GM12878 (cell line): ENCODE measurements at regions of chr12 and their contacts with region 1.

Region 1: GRCh38 chr12:62692884-62693283 is 226.3 kb downstream of the MON2 start:
- DNase-seq: no peak
- ATAC-seq: no peak
- H3K4me3 ChIP-seq: no peak overlapping the region
- H3K27ac ChIP-seq: no peak overlapping the region
- H3K4me1 ChIP-seq: no peaks in the 10 kb centered on the region; the same call in 1 of the 2 replicates
- H3K27me3 ChIP-seq: no peaks in the 10 kb centered on the region; a peak in 1 of 4 replicates
- CTCF ChIP-seq: no peak
- EP300 ChIP-seq: no peak
- POLR2A ChIP-seq: no peak
- RAD21 ChIP-seq: no peak

Region 2: GRCh38 chr12:62530596-62530995 is 162.3 kb before region 1 on chr12:
- CTCF ChIA-PET with region 1: no interaction called
- POLR2A ChIA-PET with region 1: no interaction called
- RAD21 ChIA-PET with region 1: no interaction called
- SMC1A ChIA-PET with region 1: no interaction called
- in situ Hi-C with region 1: no loop called
- intact Hi-C with region 1: no loop called
- DNase-seq: no peak
- ATAC-seq: no peak
- H3K4me3 ChIP-seq: no peak overlapping the region
- H3K27ac ChIP-seq: no peak overlapping the region
- H3K4me1 ChIP-seq: no peaks in the 10 kb centered on the region
- H3K27me3 ChIP-seq: no peaks in the 10 kb centered on the region
- CTCF ChIP-seq: no peak
- EP300 ChIP-seq: no peak
- POLR2A ChIP-seq: no peak
- RAD21 ChIP-seq: no peak

Region 3: DNA sequence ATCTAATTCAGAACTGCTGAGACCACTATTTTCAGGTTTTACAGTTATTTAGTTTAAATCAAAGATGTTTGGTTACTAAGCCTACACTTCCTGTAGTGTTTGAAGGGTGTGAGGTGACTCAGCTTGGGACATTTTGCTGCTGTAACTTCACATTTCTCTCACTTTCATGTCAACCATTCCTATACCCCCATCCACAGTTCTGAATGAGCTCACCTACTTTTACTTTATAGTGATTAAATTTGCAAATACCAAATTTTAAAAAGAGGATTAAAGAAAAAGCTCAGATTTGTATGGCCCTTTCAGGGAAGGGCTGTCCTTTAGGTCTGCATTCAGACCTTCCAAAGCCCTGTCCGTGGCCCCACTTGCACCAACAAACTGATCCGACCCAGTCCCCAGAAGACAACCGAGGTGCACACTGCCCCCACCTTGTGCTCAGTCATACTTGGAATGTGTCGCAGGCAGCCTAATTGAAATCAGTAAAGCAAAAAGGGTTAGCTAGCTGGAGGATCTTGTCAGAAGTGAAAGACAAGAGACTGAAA is 51.9 kb before region 1 on chr12:
- CTCF ChIA-PET with region 1: interaction called, 5 read pairs
- POLR2A ChIA-PET with region 1: interaction called, 3 read pairs
- RAD21 ChIA-PET with region 1: interaction called, 4 read pairs
- SMC1A ChIA-PET with region 1: interaction called, 11 read pairs
- in situ Hi-C with region 1: no loop called
- intact Hi-C with region 1: no loop called
- DNase-seq: peak; percentile 27
- ATAC-seq: peak; percentile 95
- H3K4me3 ChIP-seq: peak overlapping the region; percentile 4; the same call in 1 of the 2 replicates
- H3K27ac ChIP-seq: no peak overlapping the region
- H3K4me1 ChIP-seq: peaks cover 6% of the 10 kb centered on the region; the same call in 1 of the 2 replicates
- H3K27me3 ChIP-seq: no peaks in the 10 kb centered on the region
- CTCF ChIP-seq: no peak
- EP300 ChIP-seq: 0 out of 4 replicates have a peak, but pooled peaks of 1 of the 2 experiments have one; percentile 21
- POLR2A ChIP-seq: no peak
- RAD21 ChIP-seq: peak; percentile 26; the same call in 1 of the 2 replicates

Region 4: GRCh38 chr12:62703011-62703380 is 10.1 kb after region 1 on chr12:
- CTCF ChIA-PET with region 1: interaction called, 5 read pairs
- POLR2A ChIA-PET with region 1: interaction called, 4 read pairs
- RAD21 ChIA-PET with region 1: interaction called, 6 read pairs
- SMC1A ChIA-PET with region 1: interaction called, 30 read pairs
- in situ Hi-C with region 1: no loop called
- intact Hi-C with region 1: no loop called
- DNase-seq: no peak
- ATAC-seq: no peak
- H3K4me3 ChIP-seq: no peak overlapping the region
- H3K27ac ChIP-seq: no peak overlapping the region
- H3K4me1 ChIP-seq: no peaks in the 10 kb centered on the region; the same call in 1 of the 2 replicates
- H3K27me3 ChIP-seq: no peaks in the 10 kb centered on the region; a peak in 1 of 4 replicates
- CTCF ChIP-seq: no peak
- EP300 ChIP-seq: no peak
- POLR2A ChIP-seq: no peak
- RAD21 ChIP-seq: no peak

Region 5: DNA sequence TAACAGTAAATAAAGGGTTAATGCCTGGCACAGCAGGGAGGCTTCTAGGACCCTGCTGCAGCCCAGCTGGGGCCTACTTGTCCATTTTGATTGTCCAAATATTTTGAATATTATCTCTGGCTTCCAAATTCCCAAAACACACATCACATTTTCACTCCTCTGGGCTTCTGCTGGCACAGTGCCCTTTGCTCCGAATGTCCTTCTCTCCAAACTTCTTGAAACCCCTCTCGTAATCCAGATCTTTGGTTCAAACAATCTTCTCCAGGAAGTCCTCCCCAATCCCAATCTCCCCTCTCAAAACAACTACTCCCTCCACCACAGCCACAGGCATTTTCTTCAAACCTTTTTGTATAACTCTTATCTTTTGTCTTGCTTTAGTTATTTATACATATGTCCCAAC is 16.4 kb after region 1 on chr12:
- CTCF ChIA-PET with region 1: interaction called, 5 read pairs
- POLR2A ChIA-PET with region 1: interaction called, 4 read pairs
- RAD21 ChIA-PET with region 1: interaction called, 6 read pairs
- SMC1A ChIA-PET with region 1: interaction called, 30 read pairs
- in situ Hi-C with region 1: no loop called
- intact Hi-C with region 1: no loop called
- DNase-seq: no peak
- ATAC-seq: no peak
- H3K4me3 ChIP-seq: no peak overlapping the region
- H3K27ac ChIP-seq: no peak overlapping the region
- H3K4me1 ChIP-seq: no peaks in the 10 kb centered on the region
- H3K27me3 ChIP-seq: no peaks in the 10 kb centered on the region
- CTCF ChIP-seq: no peak
- EP300 ChIP-seq: no peak
- POLR2A ChIP-seq: no peak
- RAD21 ChIP-seq: no peak

Region 6: GRCh38 chr12:62793256-62794217 is 100.7 kb after region 1 on chr12:
- CTCF ChIA-PET with region 1: interaction called, 6 read pairs
- POLR2A ChIA-PET with region 1: no interaction called
- RAD21 ChIA-PET with region 1: interaction called, 11 read pairs
- SMC1A ChIA-PET with region 1: interaction called, 9 read pairs
- in situ Hi-C with region 1: no loop called
- intact Hi-C with region 1: no loop called
- DNase-seq: peak; percentile 27
- ATAC-seq: peak; percentile 84
- H3K4me3 ChIP-seq: no peak overlapping the region
- H3K27ac ChIP-seq: no peak overlapping the region
- H3K4me1 ChIP-seq: no peaks in the 10 kb centered on the region
- H3K27me3 ChIP-seq: no peaks in the 10 kb centered on the region
- CTCF ChIP-seq: peak; percentile 89 to 96 (median 96)
- EP300 ChIP-seq: no peak
- POLR2A ChIP-seq: no peak
- RAD21 ChIP-seq: peak; percentile 98

Region 7: DNA sequence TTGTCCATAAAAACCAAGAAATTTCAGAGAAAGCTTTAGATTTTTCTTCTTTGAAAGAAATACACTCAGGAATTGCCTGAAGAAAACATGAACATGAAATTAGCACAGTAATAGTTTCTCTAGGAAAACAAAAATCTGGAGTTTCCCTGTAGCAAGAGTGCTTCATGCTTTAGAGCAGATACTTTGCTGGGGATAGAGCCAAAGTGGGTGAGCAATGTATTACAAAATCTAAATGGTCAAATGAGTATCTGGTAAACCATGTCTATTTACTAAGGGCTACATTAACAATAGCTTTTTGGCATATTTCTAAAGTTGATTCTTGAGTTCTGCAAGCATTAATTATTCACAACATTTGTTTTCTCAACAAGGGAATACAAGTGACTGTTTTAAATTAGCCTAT is 431.9 kb after region 1 on chr12:
- CTCF ChIA-PET with region 1: no interaction called
- POLR2A ChIA-PET with region 1: no interaction called
- RAD21 ChIA-PET with region 1: no interaction called
- SMC1A ChIA-PET with region 1: no interaction called
- in situ Hi-C with region 1: no loop called
- intact Hi-C with region 1: no loop called
- DNase-seq: no peak
- ATAC-seq: no peak
- H3K4me3 ChIP-seq: no peak overlapping the region
- H3K27ac ChIP-seq: no peak overlapping the region
- H3K4me1 ChIP-seq: no peaks in the 10 kb centered on the region
- H3K27me3 ChIP-seq: no peaks in the 10 kb centered on the region
- CTCF ChIP-seq: no peak
- EP300 ChIP-seq: no peak
- POLR2A ChIP-seq: no peak
- RAD21 ChIP-seq: no peak